Dorsolateral prefrontal cortex (tissue), 120 donors: ENCODE measurements at regions of chr1 and their contacts with region 1.

Region 1: GRCh38 chr1:92749024-92749634 is 35.8 kb downstream of the EVI5 start:
- DNase-seq: peak in 1 of 10 donors; percentile 34
- H3K4me3 ChIP-seq: no peak overlapping the region
- H3K27ac ChIP-seq: peak overlapping the region in 3 of 59 donors; percentile 7 to 22 (median 15)
- H3K27me3 ChIP-seq: no peaks in the 10 kb centered on the region
- CTCF ChIP-seq: peak; percentile 27 to 82 (median 64)

Region 2: DNA sequence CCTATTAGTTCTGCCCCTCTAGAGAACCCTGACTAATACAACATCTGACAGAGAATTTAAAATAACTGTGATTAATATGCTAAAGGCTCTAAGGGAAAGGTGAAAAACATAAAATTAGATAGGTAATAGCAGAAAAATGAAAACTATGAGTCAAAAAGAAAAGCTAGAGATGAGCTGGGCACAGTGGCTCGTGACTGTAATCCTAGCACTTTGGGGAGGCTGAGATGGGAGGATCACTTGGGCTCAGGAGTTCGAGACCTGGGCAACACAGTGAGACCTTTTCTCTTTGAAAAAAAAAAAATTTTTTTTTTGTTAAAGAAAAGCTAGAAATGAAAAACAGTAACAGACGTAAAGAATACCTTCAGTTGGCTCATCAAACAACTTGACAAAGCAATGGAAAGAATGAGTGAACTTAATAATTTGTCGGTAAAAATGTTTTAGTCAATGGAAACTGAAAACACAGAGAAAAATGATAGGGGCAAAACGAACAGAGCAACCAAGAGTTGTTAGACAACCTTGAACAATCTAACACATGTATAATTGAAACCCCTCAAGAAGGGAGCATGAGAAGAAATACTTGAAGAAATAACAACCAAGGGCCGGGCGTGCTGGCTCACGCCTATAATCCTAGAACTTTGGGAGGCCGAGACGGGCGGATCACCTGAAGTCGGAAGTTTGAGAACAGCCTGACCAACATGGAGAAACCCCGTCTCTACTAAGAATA is 129.5 kb before region 1 on chr1:
- intact Hi-C with region 1: no loop called
- DNase-seq: no peak
- H3K4me3 ChIP-seq: no peak overlapping the region
- H3K27ac ChIP-seq: no peak overlapping the region
- H3K27me3 ChIP-seq: no peaks in the 10 kb centered on the region
- CTCF ChIP-seq: no peak

Region 3: DNA sequence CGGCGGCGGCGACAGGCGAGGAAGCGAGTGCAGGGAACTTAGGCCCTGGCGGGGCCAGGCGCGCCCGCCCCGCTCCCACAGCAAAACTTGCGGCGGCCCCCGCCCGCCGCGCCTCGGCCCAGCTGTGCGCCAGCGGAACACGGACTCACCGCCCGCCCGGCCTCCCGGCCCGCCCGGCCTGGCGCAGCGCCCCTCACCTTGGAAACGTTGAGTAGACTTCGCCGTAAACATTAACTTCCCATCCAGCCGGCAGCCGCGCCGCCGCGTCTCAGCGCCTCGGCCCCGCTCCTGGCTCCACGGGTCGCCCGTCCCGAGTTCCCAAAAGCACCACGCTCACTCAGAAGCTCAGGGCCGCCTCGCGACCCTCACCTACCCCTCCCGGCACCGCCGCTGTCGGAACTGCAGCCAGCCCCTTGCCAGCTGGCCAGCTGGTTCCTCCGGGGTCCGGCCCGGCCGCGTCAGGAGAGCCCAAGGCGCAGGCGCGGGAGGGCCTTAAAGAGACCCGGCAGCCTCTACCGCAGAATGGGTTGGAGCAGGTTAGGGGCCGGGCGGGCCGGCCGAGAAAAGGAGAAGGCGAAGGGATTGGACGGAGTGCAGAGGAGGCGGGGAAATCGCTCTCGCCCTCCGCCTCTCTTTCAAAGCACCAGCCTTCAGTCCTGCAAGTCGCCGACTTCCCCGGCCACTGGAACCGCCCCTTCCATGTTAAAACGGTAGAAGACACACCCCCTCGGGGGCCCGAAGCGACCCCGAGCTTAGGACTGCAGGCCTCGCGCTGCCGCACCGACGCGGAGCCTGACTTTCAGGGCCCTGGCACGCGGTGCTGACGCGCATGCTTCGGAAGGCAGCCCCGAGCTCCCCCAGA is 35.7 kb after region 1 on chr1 and contains the start of gene EVI5:
- intact Hi-C with region 1: loop called in 1 of 2 experiments (anchors 2 kb)
- DNase-seq: peak; percentile 75 to 93 (median 88)
- H3K4me3 ChIP-seq: peak within 1 kb of the TSS; percentile 67 to 97 (median 89)
- H3K27ac ChIP-seq: peak within 1 kb of the TSS; percentile 73 to 97 (median 92)
- H3K27me3 ChIP-seq: no peaks in the 10 kb centered on the region
- CTCF ChIP-seq: peak in 32 of 56 donors; percentile 5 to 52 (median 32)
- total RNA-seq, gene EVI5: 37.6 to 71.9 (median 55.0) TPM

Region 4: GRCh38 chr1:92817986-92818764 is 69.0 kb after region 1 on chr1:
- intact Hi-C with region 1: loop called (anchors 2 to 5 kb)
- DNase-seq: no peak
- H3K4me3 ChIP-seq: no peak overlapping the region
- H3K27ac ChIP-seq: no peak overlapping the region
- H3K27me3 ChIP-seq: no peaks in the 10 kb centered on the region
- CTCF ChIP-seq: peak; percentile 23 to 73 (median 57)

Region 5: DNA sequence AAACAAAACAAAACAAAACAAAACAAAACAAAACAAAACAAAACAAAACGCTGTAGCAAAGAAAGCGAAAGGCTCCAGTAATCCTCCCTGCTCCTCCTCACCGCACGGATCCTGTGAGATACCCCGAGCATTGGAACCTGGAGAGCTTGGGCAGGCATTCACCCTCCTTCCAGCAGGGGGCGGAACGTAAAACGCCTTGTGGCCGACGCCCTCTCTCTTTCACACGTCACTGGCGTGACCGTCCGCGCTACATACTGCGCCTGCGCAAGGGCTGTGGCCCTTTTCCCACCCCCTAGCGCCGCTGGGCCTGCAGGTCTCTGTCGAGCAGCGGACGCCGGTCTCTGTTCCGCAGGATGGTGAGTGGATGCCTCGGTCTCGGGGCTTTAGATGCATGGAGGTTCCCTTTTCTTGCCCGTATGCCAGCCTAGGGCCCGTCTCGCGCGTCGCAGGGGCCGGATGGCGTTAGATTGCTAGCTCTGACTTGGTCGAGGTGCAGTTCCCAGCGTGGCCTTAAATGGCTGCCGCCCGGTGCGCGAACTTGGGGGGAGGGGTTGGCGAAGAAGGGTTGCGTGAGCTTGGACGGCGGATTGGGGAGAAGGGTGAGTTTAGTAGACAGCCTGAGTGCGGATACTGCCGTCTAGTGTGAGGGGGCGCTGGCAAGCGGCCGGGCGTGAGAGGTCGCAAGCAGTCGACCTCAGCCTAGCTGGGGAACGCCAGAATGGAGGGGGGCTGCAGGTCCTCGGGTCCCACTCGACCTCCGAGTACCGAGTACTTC is 82.8 kb after region 1 on chr1 and contains the start of gene RPL5:
- intact Hi-C with region 1: loop called (anchors 5 kb)
- DNase-seq: peak; percentile 94 to 98 (median 95)
- H3K4me3 ChIP-seq: peak within 1 kb of the TSS; percentile 67 to 99 (median 91)
- H3K27ac ChIP-seq: peak within 1 kb of the TSS; percentile 57 to 99 (median 94)
- H3K27me3 ChIP-seq: no peaks in the 10 kb centered on the region
- CTCF ChIP-seq: peak; percentile 89 to 100 (median 98)
- total RNA-seq, gene RPL5: 222 to 435 (median 286) TPM